Activated CD4-positive, alpha-beta memory T cell treated with anti-CD3 and anti-CD28 coated beads for 36 hours (primary cell): ENCODE measurements at regions of chr16 and their contacts with region 1.

Region 1: GRCh38 chr16:48632137-48632774 is 22.3 kb upstream of the N4BP1 start:
- DNase-seq: no peak
- H3K4me3 Mint-ChIP-seq: no peak overlapping the region
- H3K27ac Mint-ChIP-seq: no peak overlapping the region
- H3K4me1 Mint-ChIP-seq: peaks cover 8% of the 10 kb centered on the region
- H3K27me3 Mint-ChIP-seq: peaks cover 2% of the 10 kb centered on the region

Region 2: DNA sequence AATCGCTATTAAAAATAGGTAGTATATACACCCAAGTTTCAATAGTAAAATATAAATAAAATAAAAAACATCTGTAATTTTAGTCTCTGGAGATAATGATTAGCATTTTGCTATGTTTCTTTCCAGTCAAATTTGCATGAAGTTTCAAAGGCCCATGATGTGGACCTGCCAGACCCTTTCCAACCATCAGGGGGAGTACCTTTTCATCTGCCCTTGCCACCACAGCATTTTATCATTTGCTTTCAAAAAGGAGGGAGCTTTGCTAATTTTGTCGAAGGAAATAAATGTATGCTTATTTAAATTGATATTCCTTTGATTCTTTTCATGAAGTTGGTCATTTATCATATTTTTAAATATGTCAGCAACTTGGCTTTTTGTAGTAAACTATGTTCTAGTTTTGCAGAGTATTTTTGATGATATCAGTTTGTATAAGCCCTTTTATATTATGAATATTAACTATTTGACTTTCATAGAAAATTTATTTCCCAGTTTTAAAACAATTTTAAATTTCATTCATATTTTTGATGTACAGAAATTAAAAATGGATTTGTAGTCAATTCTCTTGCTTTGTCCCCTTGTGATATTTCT is 1373.3 kb before region 1 on chr16:
- CTCF ChIA-PET with region 1: no interaction called
- POLR2A ChIA-PET with region 1: no interaction called
- intact Hi-C with region 1: loop called (anchors 5 kb)
- DNase-seq: peak; percentile 16
- H3K4me3 Mint-ChIP-seq: no peak overlapping the region
- H3K27ac Mint-ChIP-seq: no peak overlapping the region
- H3K4me1 Mint-ChIP-seq: no peaks in the 10 kb centered on the region
- H3K27me3 Mint-ChIP-seq: no peaks in the 10 kb centered on the region

Region 3: GRCh38 chr16:48182979-48183537 is 449.2 kb before region 1 on chr16:
- CTCF ChIA-PET with region 1: no interaction called
- POLR2A ChIA-PET with region 1: no interaction called
- intact Hi-C with region 1: loop called (anchors 5 kb)
- DNase-seq: no peak
- H3K4me3 Mint-ChIP-seq: no peak overlapping the region
- H3K27ac Mint-ChIP-seq: no peak overlapping the region
- H3K4me1 Mint-ChIP-seq: no peaks in the 10 kb centered on the region
- H3K27me3 Mint-ChIP-seq: no peaks in the 10 kb centered on the region

Region 4: GRCh38 chr16:48526058-48526957 is 105.9 kb before region 1 on chr16:
- CTCF ChIA-PET with region 1: interaction called, 19 read pairs
- POLR2A ChIA-PET with region 1: no interaction called
- intact Hi-C with region 1: no loop called
- DNase-seq: peak; percentile 65
- H3K4me3 Mint-ChIP-seq: no peak overlapping the region
- H3K27ac Mint-ChIP-seq: no peak overlapping the region
- H3K4me1 Mint-ChIP-seq: no peaks in the 10 kb centered on the region
- H3K27me3 Mint-ChIP-seq: no peaks in the 10 kb centered on the region

Region 5: GRCh38 chr16:49048557-49048956 is 416.3 kb after region 1 on chr16:
- CTCF ChIA-PET with region 1: no interaction called
- POLR2A ChIA-PET with region 1: no interaction called
- intact Hi-C with region 1: no loop called
- DNase-seq: no peak
- H3K4me3 Mint-ChIP-seq: no peak overlapping the region
- H3K27ac Mint-ChIP-seq: no peak overlapping the region
- H3K4me1 Mint-ChIP-seq: no peaks in the 10 kb centered on the region
- H3K27me3 Mint-ChIP-seq: no peaks in the 10 kb centered on the region